A673 (cell line): ENCODE measurements at regions of chr20 and their contacts with region 1.

Region 1: DNA sequence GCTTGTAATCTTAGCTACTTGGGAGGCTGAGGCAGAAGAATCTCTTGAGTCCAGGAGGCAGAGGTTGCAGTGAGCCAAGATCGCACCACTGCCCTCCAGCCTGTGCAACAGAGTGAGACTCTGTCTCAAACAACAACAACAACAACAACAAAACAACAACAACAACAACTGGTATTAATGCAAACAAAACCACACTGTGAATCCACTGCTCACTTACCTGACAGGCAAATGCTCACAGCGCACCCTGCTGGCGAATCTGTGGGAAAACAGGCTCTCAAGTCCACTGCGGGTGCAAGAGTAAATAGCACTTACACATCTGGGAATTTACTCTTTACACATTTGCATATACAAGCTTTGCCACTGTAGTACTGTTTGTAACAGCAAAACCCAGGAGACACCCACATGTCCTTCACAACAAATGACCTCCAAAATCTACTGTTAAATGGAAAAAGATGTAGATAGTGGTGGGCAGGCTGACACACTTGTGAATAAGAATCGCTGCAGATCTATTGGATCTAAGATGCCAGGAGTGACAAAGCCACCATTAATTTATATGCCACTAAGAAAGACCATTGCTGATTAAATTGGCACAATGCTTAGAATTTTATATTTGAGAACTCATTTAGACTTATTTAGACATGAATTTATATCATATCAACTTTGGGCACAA is 29.3 kb downstream of the NSFL1C start:
- DNase-seq: peak; percentile 73
- H3K4me3 ChIP-seq: no peak overlapping the region
- H3K27ac ChIP-seq: no peak overlapping the region
- H3K4me1 ChIP-seq: no peaks in the 10 kb centered on the region
- H3K27me3 ChIP-seq: no peaks in the 10 kb centered on the region
- CTCF ChIP-seq: peak; percentile 89

Region 2: DNA sequence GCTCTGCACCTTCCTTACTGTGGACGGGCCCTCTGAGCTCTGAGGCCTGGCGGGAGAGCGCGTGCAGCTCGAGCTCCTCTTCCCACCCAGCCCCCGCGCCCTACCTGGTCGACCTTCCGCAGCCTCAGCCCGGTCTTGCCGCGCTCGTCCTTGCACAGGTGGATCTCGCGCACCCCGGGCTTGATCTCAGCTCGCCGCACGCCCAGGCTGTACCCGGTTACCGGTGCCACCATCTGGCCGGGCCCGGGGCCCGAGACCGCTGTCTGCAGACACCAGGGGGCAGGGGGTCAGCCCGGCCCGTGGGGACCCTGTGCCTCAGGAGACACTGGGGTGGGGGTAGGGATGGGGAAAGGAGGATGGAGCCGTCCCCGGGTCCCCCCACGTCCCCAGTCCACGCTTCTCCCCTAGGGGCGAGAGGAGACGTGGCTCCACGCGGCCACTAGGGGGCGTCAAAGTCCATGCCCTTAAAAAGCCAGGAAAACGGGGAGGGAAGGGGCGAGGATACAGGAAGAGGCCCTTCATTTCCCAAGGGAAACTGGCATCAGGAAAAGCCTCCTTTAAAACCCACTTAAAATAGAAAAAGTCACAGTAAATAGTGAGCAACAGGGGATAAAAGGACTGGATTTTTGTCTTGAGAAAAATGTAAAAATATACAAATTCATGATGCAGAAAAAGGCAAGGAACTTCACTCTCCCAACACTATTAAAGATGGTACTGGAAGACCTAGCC is 124.0 kb before region 1 on chr20:
- CTCF ChIA-PET with region 1: interaction called, 7 read pairs
- POLR2A ChIA-PET with region 1: no interaction called
- intact Hi-C with region 1: loop called (anchors 1 kb)
- DNase-seq: peak; percentile 87
- H3K4me3 ChIP-seq: no peak overlapping the region
- H3K27ac ChIP-seq: peak overlapping the region; percentile 1
- H3K4me1 ChIP-seq: peaks cover 5% of the 10 kb centered on the region
- H3K27me3 ChIP-seq: no peaks in the 10 kb centered on the region
- CTCF ChIP-seq: peak; percentile 96

Region 3: DNA sequence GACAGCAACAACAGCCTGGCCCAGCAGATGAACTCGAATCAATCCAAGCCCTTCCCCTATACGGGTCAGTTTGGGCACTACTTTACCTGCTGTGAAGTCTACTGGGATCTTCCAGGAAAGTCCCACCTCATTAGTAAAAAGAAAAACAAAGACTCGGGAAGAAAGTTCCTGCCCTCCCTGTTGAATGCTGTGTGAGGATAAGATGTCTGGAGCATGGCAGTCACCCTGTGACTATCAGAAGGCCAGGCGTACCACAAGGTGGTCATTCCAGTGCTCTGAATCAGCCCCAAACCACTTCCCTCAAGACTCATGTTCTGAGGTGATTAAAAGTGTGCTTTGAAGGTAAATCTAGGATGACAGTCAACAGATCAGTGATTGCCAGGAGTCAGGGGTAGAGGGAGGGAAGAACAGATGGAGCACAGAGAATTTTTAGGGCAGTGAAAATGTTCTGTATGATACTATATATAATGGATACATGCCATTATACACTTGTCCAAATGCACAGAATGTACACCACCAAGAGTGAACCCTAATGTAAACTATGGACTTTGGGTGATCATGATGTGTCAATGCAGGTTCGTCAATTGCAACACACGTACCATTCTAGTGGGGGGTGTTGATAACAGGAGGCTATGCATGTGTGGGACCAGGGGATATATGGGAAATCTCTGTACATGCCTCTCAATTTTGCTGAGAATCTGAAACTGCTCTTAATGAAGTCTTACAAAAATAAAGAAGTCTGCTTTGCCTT is 59.2 kb before region 1 on chr20:
- CTCF ChIA-PET with region 1: no interaction called
- POLR2A ChIA-PET with region 1: no interaction called
- intact Hi-C with region 1: no loop called
- DNase-seq: no peak
- H3K4me3 ChIP-seq: no peak overlapping the region
- H3K27ac ChIP-seq: no peak overlapping the region
- H3K4me1 ChIP-seq: peaks cover 15% of the 10 kb centered on the region
- H3K27me3 ChIP-seq: no peaks in the 10 kb centered on the region
- CTCF ChIP-seq: no peak

Region 4: DNA sequence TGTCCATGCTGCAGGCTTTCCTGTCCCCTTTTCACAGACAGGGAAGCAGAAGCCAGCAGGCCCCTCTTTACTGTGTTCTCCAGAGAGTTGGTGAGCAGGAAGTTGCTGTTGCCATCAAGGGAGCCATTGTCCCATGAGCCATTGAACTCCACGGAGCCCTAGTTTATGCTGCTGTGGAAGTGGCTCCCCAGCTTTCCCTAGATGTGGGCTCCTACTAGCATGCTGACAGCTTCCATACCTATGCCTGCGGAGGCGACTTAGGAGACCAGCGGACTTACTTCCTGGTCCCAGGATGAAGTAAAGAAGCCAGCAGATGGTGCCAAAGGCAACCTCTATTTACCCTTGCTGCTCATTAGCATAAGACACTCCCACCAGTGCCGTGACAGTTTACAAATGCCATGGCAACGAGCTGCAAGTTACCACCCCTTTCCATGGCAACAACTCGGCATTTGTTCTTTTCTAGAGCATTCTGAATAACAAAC is 13.7 kb before region 1 on chr20:
- CTCF ChIA-PET with region 1: interaction called, 12 read pairs
- POLR2A ChIA-PET with region 1: no interaction called
- intact Hi-C with region 1: no loop called
- DNase-seq: peak; percentile 93
- H3K4me3 ChIP-seq: no peak overlapping the region
- H3K27ac ChIP-seq: no peak overlapping the region
- H3K4me1 ChIP-seq: peaks cover 26% of the 10 kb centered on the region
- H3K27me3 ChIP-seq: no peaks in the 10 kb centered on the region
- CTCF ChIP-seq: peak; percentile 64